ENCODE measurements at regions of chr6 and their contacts with region 1.

Region 1: GRCh38 chr6:72411872-72412708 is 209.8 kb upstream of the KCNQ5 start:
- DNase-seq: peak; percentile 82
- H3K4me3 Mint-ChIP-seq: no peak overlapping the region
- H3K27ac Mint-ChIP-seq: no peak overlapping the region
- H3K4me1 Mint-ChIP-seq: no peaks in the 10 kb centered on the region
- H3K27me3 Mint-ChIP-seq: peaks cover 4% of the 10 kb centered on the region

Region 2: DNA sequence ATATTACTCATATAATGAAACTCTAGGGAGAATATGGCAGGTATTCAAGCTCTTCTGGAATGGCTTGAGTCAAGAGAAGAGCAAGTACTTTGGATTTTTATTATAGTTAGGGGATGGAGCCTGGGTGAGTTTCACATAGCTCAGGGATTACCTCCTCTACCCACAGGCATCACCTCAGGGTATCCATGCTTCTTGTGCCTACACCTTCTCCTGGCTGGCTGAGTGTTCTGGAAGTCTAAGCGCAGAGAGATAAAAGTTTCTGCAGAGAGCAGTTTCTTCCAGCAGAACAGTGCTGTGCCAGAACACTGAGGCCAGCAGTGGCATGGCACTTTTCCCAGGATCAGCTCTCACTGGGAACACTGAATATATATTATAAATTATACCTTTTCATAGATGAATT is 10.1 kb after region 1 on chr6:
- CTCF ChIA-PET with region 1: interaction called, 27 read pairs
- intact Hi-C with region 1: no loop called
- DNase-seq: no peak
- H3K4me3 Mint-ChIP-seq: no peak overlapping the region
- H3K27ac Mint-ChIP-seq: no peak overlapping the region
- H3K4me1 Mint-ChIP-seq: no peaks in the 10 kb centered on the region
- H3K27me3 Mint-ChIP-seq: no peaks in the 10 kb centered on the region

Region 3: DNA sequence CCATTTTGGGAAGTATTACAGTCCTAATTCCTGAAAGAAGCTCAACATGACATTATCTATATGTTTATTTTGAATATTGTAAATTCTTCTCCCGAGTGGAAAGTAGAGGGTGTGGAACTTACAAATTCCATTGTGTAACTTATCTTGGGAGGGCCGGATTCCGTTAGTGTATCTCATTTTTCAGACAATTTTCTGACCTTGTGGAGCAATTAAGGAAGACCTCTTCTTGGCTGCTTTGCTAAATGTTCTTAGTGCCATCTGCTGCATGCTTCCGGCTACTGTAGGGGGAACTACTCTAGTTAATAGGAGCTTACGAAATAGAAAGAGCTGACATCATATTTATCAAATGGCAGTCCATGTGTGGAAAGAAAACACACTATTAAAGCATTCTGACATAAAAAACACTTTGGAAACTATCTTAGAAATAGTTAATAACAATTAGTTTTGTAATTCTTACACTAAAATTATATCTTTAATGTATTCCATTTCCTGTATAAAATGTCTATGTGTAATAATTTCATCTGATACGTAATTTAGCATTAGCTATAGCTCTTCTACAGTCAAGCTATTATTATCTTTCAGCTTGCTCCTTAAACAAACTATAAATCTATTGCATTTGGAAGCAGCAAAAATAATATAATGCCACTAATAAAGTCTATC is 168.3 kb after region 1 on chr6:
- CTCF ChIA-PET with region 1: interaction called, 13 read pairs
- intact Hi-C with region 1: loop called (anchors 5 kb)
- DNase-seq: peak; percentile 31
- H3K4me3 Mint-ChIP-seq: no peak overlapping the region
- H3K27ac Mint-ChIP-seq: no peak overlapping the region
- H3K4me1 Mint-ChIP-seq: peaks cover 3% of the 10 kb centered on the region
- H3K27me3 Mint-ChIP-seq: no peaks in the 10 kb centered on the region

Region 4: DNA sequence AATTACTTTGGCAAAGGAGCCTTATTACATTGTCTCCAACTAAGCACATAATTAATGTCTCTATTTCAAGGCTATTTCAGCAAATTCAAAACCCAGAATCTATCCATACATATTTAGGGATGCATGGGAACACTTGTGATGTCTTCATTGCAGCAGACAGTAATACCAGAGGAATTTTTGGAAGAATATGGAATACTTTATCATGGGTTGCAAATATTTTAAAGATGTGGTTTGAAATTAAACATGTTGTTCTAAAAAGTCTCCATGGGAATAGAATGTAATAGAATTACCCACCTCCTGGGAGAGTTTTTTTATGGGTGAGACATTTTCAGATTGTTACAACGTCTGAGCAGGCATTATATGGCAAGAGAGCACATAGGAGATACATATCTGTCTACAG is 380.6 kb after region 1 on chr6:
- CTCF ChIA-PET with region 1: no interaction called
- intact Hi-C with region 1: loop called (anchors 1 kb)
- DNase-seq: no peak
- H3K4me3 Mint-ChIP-seq: no peak overlapping the region
- H3K27ac Mint-ChIP-seq: no peak overlapping the region
- H3K4me1 Mint-ChIP-seq: peaks cover 8% of the 10 kb centered on the region
- H3K27me3 Mint-ChIP-seq: no peaks in the 10 kb centered on the region

Region 5: DNA sequence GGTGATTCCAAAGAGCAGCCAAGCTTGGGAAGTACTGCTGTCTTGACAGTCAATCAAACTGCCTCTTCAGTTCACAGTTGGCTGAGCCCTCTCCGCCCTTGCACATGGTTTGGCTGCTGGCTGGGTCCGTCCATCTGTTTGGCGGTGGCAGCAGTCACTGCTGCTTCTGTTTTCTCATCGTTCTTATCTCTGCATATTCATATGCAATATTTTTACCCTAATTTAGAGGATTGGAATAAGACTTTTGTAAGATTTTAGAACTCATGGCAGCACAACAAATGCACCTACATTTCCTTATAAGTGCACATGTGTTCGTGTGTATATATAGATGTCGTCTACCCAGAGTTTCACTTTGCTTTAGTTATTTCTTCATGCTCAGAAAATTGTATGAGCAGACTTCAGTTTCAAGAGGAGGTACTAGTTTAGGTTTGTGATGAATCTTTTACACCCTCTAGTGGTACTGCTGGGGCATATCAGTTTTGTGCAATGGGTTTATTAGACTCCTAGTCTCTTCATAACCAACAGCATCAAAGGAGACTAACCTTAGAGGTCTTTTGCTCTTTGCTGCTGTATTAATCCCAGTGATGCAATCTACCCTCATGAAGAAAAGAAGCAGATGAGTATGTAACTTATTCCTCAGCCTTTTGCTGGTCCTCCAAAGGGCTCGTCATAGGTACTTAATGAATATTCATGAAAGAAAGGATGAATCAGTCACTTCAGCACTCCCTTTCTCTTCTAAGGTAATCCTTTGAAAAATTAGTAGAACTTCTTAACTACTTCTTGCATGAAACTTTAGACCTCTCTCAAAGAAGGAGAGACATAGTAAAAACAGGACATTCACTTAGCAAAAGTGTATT is 768.9 kb after region 1 on chr6:
- CTCF ChIA-PET with region 1: interaction called, 7 read pairs
- intact Hi-C with region 1: loop called (anchors 1 kb)
- DNase-seq: peak; percentile 12
- H3K4me3 Mint-ChIP-seq: no peak overlapping the region
- H3K27ac Mint-ChIP-seq: no peak overlapping the region
- H3K4me1 Mint-ChIP-seq: peaks cover 4% of the 10 kb centered on the region
- H3K27me3 Mint-ChIP-seq: no peaks in the 10 kb centered on the region

Region 6: GRCh38 chr6:73329201-73329600 is 917.1 kb after region 1 on chr6:
- CTCF ChIA-PET with region 1: interaction called, 5 read pairs
- intact Hi-C with region 1: loop called (anchors 1 kb)
- DNase-seq: no peak
- H3K4me3 Mint-ChIP-seq: no peak overlapping the region
- H3K27ac Mint-ChIP-seq: no peak overlapping the region
- H3K4me1 Mint-ChIP-seq: no peaks in the 10 kb centered on the region
- H3K27me3 Mint-ChIP-seq: peaks cover 8% of the 10 kb centered on the region

Measured in activated naive CD4-positive, alpha-beta T cell treated with anti-CD3 and anti-CD28 coated beads for 36 hours (primary cell).